ENCODE measurements at regions of chr2 and their contacts with region 1.

Region 1: GRCh38 chr2:95345566-95346230 is 48.6 kb downstream of the KCNIP3 start:
- DNase-seq: peak; percentile 84
- H3K4me3 Mint-ChIP-seq: peak overlapping the region; percentile 84
- H3K27ac Mint-ChIP-seq: peak overlapping the region; percentile 53
- H3K4me1 Mint-ChIP-seq: peaks cover 24% of the 10 kb centered on the region
- H3K27me3 Mint-ChIP-seq: no peaks in the 10 kb centered on the region
- CTCF ChIP-seq: peak; percentile 91

Region 2: GRCh38 chr2:95277246-95277906 is 68.3 kb before region 1 on chr2:
- CTCF ChIA-PET with region 1: interaction called, 14 read pairs
- POLR2A ChIA-PET with region 1: interaction called, 4 read pairs
- intact Hi-C with region 1: no loop called
- DNase-seq: peak; percentile 90
- H3K4me3 Mint-ChIP-seq: peak overlapping the region; percentile 55
- H3K27ac Mint-ChIP-seq: peak overlapping the region; percentile 63
- H3K4me1 Mint-ChIP-seq: peaks cover 31% of the 10 kb centered on the region
- H3K27me3 Mint-ChIP-seq: no peaks in the 10 kb centered on the region
- CTCF ChIP-seq: no peak

Region 3: GRCh38 chr2:95323347-95324185 is 22.1 kb before region 1 on chr2:
- CTCF ChIA-PET with region 1: interaction called, 40 read pairs
- POLR2A ChIA-PET with region 1: no interaction called
- intact Hi-C with region 1: loop called (anchors 1 kb)
- DNase-seq: peak; percentile 80
- H3K4me3 Mint-ChIP-seq: no peak overlapping the region
- H3K27ac Mint-ChIP-seq: no peak overlapping the region
- H3K4me1 Mint-ChIP-seq: peaks cover 10% of the 10 kb centered on the region
- H3K27me3 Mint-ChIP-seq: no peaks in the 10 kb centered on the region
- CTCF ChIP-seq: peak; percentile 76

Region 4: DNA sequence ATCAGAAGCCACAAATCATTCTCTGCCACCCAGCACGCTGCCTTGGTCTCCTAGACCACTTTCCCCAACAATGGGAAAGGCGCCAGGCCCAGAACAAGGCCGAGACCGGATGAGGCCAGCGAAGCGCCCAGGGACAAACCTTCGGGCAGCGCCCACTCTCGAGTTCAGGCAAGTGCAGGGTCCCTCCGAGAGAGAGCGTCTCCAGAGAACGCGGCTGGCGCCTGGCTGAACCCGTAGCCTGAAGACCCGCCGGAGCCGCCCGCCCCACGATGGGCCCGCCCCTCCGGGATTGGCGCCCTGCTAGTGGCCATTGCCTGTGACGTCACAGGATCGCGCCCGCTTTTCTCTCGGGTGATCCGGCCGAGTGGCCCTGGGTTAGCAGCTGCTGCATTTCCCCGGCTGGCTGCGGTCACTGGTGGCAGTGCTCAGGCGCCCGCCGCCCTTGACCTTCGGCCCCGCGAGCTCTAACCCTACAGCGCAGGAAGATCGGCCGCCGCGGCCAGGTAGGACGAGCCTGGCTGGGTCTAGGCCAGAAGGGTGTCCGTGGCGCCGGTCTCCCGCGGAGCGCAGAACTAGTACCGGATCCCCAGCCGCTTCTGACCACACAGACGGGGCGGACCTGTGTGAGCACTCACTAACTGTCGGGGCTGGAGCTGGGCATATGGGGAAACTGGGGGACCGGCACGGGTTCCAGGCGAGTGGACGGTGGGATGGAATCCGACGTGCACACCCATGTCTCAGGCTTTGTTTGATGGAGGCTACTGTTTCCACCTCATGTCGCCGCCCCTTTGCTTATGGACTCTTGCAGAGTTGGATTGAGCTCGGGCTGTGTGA is 56.9 kb after region 1 on chr2 and contains the start of gene FAHD2A:
- CTCF ChIA-PET with region 1: interaction called, 24 read pairs
- POLR2A ChIA-PET with region 1: interaction called, 16 read pairs
- intact Hi-C with region 1: loop called (anchors 1 kb)
- DNase-seq: peak; percentile 91
- H3K4me3 Mint-ChIP-seq: peak within 1 kb of the TSS; percentile 99
- H3K27ac Mint-ChIP-seq: peak within 1 kb of the TSS; percentile 96
- H3K4me1 Mint-ChIP-seq: peaks cover 8% of the 10 kb centered on the region
- H3K27me3 Mint-ChIP-seq: no peaks in the 10 kb centered on the region
- CTCF ChIP-seq: no peak
- total RNA-seq, gene FAHD2A: 23.9 and 24.1 TPM in 2 replicates

Region 5: GRCh38 chr2:95505222-95505621 is 159.5 kb after region 1 on chr2:
- CTCF ChIA-PET with region 1: no interaction called
- POLR2A ChIA-PET with region 1: no interaction called
- intact Hi-C with region 1: no loop called
- DNase-seq: no peak
- H3K4me3 Mint-ChIP-seq: no peak overlapping the region
- H3K27ac Mint-ChIP-seq: no peak overlapping the region
- H3K4me1 Mint-ChIP-seq: no peaks in the 10 kb centered on the region
- H3K27me3 Mint-ChIP-seq: peaks cover 30% of the 10 kb centered on the region
- CTCF ChIP-seq: no peak

Measured in MCF 10A (cell line).